Spleen (tissue), 13 donors: ENCODE measurements at regions of chr13 and their contacts with region 1.

Region 1: DNA sequence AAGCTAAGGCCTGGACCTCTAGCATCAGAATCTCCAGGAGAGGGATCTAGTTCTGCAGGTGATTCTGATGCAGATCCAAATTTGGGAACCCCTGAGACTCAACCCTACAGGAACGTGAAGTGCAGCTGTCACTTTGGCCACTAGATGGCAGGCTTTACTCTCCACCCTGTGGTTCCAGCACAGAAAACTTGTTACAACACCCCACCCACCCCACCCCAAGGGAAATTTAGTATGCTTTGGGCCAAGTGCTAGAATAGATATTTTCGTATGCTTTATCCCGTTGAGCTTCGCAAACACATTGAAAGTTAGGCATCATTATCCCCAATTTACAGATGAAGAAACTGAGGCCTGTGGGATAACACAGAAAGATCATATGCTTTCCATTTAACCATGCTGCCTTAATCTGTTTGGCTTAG is 232.0 kb downstream of the B3GLCT start:
- DNase-seq: no peak
- H3K4me3 ChIP-seq: no peak overlapping the region
- H3K27ac ChIP-seq: no peak overlapping the region
- H3K4me1 ChIP-seq: no peaks in the 10 kb centered on the region
- H3K27me3 ChIP-seq: no peaks in the 10 kb centered on the region
- CTCF ChIP-seq: peak in 9 of 11 experiments; percentile 38 to 84 (median 81)
- POLR2A ChIP-seq: no peak

Region 2: GRCh38 chr13:30963791-30964190 is 467.9 kb before region 1 on chr13:
- intact Hi-C with region 1: no loop called
- DNase-seq: no peak
- H3K4me3 ChIP-seq: no peak overlapping the region
- H3K27ac ChIP-seq: no peak overlapping the region
- H3K4me1 ChIP-seq: no peaks in the 10 kb centered on the region
- H3K27me3 ChIP-seq: peaks cover 0 to 45% (median 4%) of the 10 kb centered on the region in 7 donors
- CTCF ChIP-seq: no peak
- POLR2A ChIP-seq: no peak

Region 3: DNA sequence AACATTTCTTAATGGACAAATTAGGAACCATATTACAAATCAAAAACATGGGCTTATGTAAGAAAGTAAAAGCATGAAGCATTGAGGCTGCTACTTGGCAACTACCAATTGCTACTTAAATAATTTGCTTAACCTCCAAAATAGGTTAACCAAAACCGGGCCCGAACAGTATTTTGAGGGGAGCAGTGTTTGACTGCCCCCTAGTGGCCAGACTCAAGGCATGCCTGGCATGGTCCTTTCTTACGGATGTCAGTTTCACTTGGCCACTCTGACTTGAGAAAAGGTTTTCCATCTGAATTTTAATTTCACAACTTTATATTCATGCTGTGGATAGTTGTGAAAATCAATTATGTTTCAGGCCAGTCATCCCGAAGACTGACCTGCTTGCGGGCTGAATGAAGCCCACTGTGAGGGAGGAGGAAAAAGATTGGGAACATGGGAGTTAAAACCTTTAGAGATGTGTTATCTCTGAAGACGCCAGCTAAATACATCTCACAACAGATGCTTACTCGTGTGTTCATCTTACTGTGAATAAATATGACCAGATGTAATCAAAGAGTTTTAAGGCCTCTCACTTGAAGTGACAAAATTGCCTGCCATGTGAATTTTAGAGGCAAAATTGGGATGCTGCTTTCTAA is 310.5 kb after region 1 on chr13:
- intact Hi-C with region 1: loop called (anchors 2 kb)
- DNase-seq: no peak
- H3K4me3 ChIP-seq: no peak overlapping the region
- H3K27ac ChIP-seq: no peak overlapping the region
- H3K4me1 ChIP-seq: peaks cover 0 to 14% (median 4%) of the 10 kb centered on the region in 6 donors
- H3K27me3 ChIP-seq: peaks cover 0 to 21% (median 0%) of the 10 kb centered on the region in 7 donors
- CTCF ChIP-seq: peak; percentile 62 to 96 (median 90)
- POLR2A ChIP-seq: no peak